ENCODE measurements at regions of chr6 and their contacts with region 1.

Region 1: DNA sequence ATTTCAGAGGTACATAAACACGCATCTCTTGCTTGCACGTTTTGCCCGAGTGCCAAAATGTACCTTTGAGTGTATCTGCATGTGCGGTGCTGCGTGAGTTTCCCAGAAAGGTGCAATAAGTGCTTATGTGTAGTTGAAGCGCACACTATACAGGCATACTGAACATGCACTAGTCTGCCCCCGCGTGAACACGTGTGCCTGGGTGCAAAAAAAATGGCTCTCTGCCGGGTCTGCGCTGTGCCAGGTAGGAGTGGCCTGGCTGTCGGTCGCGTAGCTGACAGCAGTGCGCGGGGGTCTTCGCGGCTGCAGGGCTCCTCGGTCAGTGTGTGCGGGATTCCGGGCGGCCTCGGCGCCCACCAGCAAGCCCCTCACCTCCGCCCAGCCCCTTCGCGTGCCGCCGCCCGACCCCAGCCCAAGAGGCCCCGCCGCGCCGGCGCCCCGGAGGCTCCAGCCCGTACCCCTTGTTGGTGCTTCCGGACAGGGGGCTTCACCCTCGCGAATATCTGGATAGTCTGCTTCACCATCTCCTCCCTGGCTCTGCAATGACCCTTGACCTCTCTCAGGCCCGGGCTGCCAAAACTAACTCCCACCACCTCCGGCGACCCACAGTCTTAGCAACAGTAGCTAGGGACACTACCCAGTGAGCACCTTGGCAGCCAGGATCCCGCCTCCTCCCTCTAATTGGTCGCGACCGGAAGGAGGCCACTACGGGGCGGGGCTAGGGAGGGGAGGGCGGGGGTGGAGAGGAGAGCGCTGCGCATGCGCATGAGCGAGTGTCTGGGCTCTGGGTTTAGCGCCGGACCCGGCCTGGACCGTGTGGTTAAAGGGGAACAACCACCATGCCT is at the start of gene KIF6:
- DNase-seq: peak; percentile 92
- H3K4me3 ChIP-seq: peak within 1 kb of the TSS; percentile 68 to 83 (median 80)
- H3K27ac ChIP-seq: peak within 1 kb of the TSS in 3 of 4 donors; percentile 48 to 74 (median 60)
- H3K4me1 ChIP-seq: peaks cover 0 to 4% (median 2%) of the 10 kb centered on the region in 4 donors
- H3K27me3 ChIP-seq: no peaks in the 10 kb centered on the region
- CTCF ChIP-seq: peak in 1 of 5 experiments; percentile 25
- EP300 ChIP-seq: no peak
- POLR2A ChIP-seq: no peak
- total RNA-seq, gene KIF6: 0.14 to 46.6 (median 0.48) TPM in 3 of 4 donors, not detected in the other

Region 2: DNA sequence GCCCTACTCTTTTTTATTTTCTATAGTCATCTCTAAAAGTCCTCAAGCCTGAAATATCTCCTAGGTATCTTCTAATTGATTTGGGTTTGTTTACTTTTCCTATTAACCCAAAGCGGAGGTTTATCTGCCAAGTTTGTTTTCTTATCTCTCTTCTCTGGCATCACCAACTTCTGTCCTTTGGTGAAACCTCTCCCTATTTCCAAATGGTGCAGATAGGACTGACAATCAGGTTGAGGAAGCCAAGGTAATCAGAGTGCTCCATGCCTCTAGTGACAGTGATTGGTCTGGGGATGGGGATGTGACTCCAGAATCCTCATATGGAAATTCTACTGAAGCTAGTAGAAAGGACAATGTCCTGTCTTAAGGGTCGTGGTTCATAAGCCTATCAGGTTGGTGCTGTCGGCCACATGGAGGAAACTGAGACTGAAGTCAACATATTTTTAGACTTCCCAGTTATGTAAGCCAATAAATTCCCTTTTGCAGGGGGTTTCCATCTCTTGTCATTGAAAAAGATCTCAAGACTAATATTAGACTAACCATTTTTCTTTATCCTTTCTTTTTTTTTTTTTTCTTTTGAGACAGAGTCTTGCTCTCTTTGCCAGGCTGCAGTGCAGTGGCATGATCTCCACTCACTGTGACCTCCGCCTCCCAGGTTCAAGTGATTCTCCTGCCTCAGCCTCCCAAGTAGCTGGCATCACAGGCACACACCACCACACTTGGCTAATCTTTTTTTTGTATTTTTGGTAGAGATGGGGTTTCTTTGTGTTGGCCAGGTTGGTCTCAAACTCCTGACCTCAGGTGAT is 27.8 kb before region 1 on chr6:
- in situ Hi-C with region 1: no loop called
- intact Hi-C with region 1: loop called (anchors 1 kb)
- DNase-seq: no peak
- H3K4me3 ChIP-seq: no peak overlapping the region
- H3K27ac ChIP-seq: no peak overlapping the region
- H3K4me1 ChIP-seq: no peaks in the 10 kb centered on the region
- H3K27me3 ChIP-seq: no peaks in the 10 kb centered on the region
- CTCF ChIP-seq: no peak
- EP300 ChIP-seq: no peak
- POLR2A ChIP-seq: no peak

Measured in transverse colon (tissue), 4 donors.